ENCODE measurements at regions of chr3 and their contacts with region 1.

Region 1: GRCh38 chr3:46895204-46895660 is 17.7 kb downstream of the PTH1R start:
- DNase-seq: peak in 1 of 2 experiments; percentile 80
- H3K4me3 ChIP-seq: no peak overlapping the region
- H3K27ac ChIP-seq: no peak overlapping the region
- H3K4me1 ChIP-seq: peaks cover 4 to 18% (median 13%) of the 10 kb centered on the region in 4 experiments
- H3K27me3 ChIP-seq: peaks cover 13 to 70% (median 52%) of the 10 kb centered on the region in 4 experiments
- CTCF ChIP-seq: peak in 2 of 3 experiments; percentile 68 to 75; a peak in 3 of 4 replicates
- EP300 ChIP-seq: no peak
- POLR2A ChIP-seq: no peak
- RAD21 ChIP-seq: peak; percentile 68 to 72

Region 2: DNA sequence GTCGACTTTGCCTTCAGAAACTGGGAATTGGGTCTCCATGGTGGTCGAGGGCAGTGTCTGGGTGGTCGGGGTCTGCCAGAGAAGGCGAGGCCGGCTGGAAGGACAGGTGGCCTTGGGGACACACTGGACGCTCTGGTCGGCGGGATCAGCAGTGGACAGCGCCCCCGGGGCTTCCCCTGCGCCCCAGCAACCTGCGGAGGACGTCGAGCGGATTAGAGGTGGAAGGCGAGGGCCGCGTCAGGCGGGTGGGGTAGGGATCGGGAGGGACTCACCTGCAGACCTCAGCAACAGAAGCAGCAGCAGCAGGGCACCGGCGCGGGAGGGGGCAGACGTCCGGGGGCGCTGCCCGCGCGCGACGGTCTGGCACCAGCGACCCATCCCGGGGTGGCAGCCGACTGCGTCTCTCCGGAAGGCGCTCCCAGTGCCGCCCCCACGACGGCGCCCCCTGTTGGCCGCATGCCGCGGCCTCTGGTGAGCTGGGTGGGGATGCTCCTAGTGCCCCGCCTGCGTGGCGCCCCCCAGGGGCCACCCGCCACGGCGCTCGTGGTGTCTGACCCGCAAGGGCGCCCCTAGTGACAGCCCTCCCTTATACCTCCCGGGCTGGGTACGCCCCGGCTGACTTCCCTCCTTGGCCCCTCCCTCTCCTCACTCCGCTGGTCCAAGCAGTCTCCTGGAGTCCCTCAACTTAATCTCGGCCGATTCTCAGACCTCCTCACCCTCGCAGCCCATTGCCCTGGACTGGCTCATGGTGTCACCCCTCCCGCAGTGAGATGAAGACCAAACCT is 177.6 kb before region 1 on chr3 and contains the start of gene PRSS50:
- CTCF ChIA-PET with region 1: interaction called, 11 read pairs
- POLR2A ChIA-PET with region 1: no interaction called
- DNase-seq: peak in 1 of 2 experiments; percentile 96
- H3K4me3 ChIP-seq: no peak within 1 kb of the TSS
- H3K27ac ChIP-seq: no peak within 1 kb of the TSS
- H3K4me1 ChIP-seq: no peaks in the 10 kb centered on the region; a peak in 1 of 7 replicates
- H3K27me3 ChIP-seq: no peaks in the 10 kb centered on the region; a peak in 2 of 7 replicates
- CTCF ChIP-seq: peak in 2 of 3 experiments; percentile 98 to 100; a peak in 3 of 4 replicates
- EP300 ChIP-seq: peak in 1 of 2 experiments; percentile 37; a peak in 1 of 3 replicates
- POLR2A ChIP-seq: no peak
- RAD21 ChIP-seq: peak; percentile 56 to 69; a peak in 3 of 4 replicates
- total RNA-seq, gene PRSS50: 0.47 and 0.73 TPM in 2 replicates

Region 3: GRCh38 chr3:46860017-46860830 is 35.0 kb before region 1 on chr3:
- CTCF ChIA-PET with region 1: interaction called, 88 read pairs
- POLR2A ChIA-PET with region 1: no interaction called
- DNase-seq: peak in 1 of 2 experiments; percentile 54
- H3K4me3 ChIP-seq: no peak overlapping the region
- H3K27ac ChIP-seq: no peak overlapping the region
- H3K4me1 ChIP-seq: no peaks in the 10 kb centered on the region; a peak in 2 of 7 replicates
- H3K27me3 ChIP-seq: peaks cover 0 to 6% (median 2%) of the 10 kb centered on the region in 4 experiments; a peak in 3 of 7 replicates
- CTCF ChIP-seq: peak in 2 of 3 experiments; percentile 25 to 41; a peak in 3 of 4 replicates
- EP300 ChIP-seq: no peak
- POLR2A ChIP-seq: no peak
- RAD21 ChIP-seq: peak; percentile 2 to 20; a peak in 2 of 4 replicates

Region 4: GRCh38 chr3:46882377-46883053 is 12.7 kb before region 1 on chr3:
- CTCF ChIA-PET with region 1: interaction called, 78 read pairs
- POLR2A ChIA-PET with region 1: interaction called, 5 read pairs
- DNase-seq: peak in 1 of 2 experiments; percentile 78
- H3K4me3 ChIP-seq: peak overlapping the region; percentile 57 to 75 (median 64)
- H3K27ac ChIP-seq: no peak overlapping the region
- H3K4me1 ChIP-seq: peaks cover 0 to 10% (median 5%) of the 10 kb centered on the region in 4 experiments; a peak in 6 of 7 replicates
- H3K27me3 ChIP-seq: peaks cover 53 to 93% (median 84%) of the 10 kb centered on the region in 4 experiments
- CTCF ChIP-seq: no peak
- EP300 ChIP-seq: no peak
- POLR2A ChIP-seq: no peak
- RAD21 ChIP-seq: no peak

Region 5: DNA sequence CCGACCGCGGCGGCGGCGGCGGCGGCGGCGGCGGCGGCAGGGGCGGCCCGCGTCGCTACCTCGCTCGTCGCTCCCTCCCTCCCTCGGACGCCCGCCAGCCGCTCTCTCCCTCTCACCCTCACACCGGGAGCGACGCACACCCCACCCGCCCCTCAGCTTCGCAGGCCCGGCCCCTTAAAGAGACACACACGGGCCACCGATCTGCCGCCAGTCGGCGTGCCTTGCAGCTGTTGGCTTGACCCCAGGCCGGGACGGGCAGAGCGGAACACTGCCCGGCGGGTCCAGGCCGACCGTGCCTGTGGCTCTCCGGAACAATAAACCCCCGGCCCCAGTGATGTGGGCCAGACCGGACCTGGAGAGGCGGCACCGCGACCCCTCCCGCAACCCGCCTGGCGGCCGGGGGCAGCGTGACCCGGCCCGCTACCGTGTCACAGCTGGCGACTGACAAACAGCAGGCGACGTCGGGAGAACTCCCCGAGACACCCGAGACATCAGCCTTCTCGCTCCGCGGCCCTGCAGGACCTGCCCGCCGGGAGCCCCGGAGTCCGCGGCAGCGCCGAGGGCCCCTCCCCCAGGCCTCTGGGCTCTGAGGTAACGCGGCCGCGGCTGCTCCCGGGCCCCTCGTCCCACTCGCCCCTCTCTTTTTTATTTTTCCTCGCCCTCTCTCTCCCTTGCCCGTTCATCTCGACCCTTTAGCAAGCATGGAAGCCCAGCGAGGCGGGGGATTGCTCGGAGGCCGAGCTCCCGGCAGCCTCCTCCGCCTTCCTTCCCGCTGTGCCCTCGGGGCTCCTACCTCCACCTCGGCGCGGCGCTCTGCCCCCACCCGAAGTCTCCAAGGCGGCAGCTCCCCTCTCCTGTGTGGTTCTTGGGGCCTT is 269.0 kb after region 1 on chr3 and contains the start of gene SETD2:
- CTCF ChIA-PET with region 1: no interaction called
- POLR2A ChIA-PET with region 1: no interaction called
- DNase-seq: peak; percentile 81 to 87
- H3K4me3 ChIP-seq: peak within 1 kb of the TSS; percentile 56 to 91 (median 81)
- H3K27ac ChIP-seq: peak within 1 kb of the TSS; percentile 76
- H3K4me1 ChIP-seq: peaks cover 0 to 7% (median 4%) of the 10 kb centered on the region in 4 experiments; a peak in 3 of 7 replicates
- H3K27me3 ChIP-seq: no peaks in the 10 kb centered on the region
- CTCF ChIP-seq: peak; percentile 20 to 33 (median 31)
- EP300 ChIP-seq: no peak; a peak in 1 of 3 replicates
- POLR2A ChIP-seq: peak; percentile 17 to 77
- RAD21 ChIP-seq: peak; percentile 39 to 50; a peak in 3 of 4 replicates
- total RNA-seq, gene SETD2: 44.6 and 46.3 TPM in 2 replicates

Measured in H1 (cell line).